ENCODE measurements at regions of chr20 and their contacts with region 1.

Region 1: GRCh38 chr20:45880988-45881788 is at the start of gene ZSWIM1:
- DNase-seq: peak; percentile 95 to 100 (median 98)
- ATAC-seq: peak; percentile 96 to 99 (median 96)
- H3K4me3 ChIP-seq: peak within 1 kb of the TSS; percentile 66 to 85
- H3K4me3 Mint-ChIP-seq: peak within 1 kb of the TSS; percentile 81 to 90 (median 88)
- H3K27ac ChIP-seq: peak within 1 kb of the TSS; percentile 71
- H3K27ac Mint-ChIP-seq: peak within 1 kb of the TSS; percentile 89 to 95
- H3K4me1 ChIP-seq: peaks cover 5 to 32% of the 10 kb centered on the region in 2 experiments
- H3K4me1 Mint-ChIP-seq: peaks cover 43 to 44% (median 43%) of the 10 kb centered on the region in 3 donors
- H3K27me3 ChIP-seq: no peaks in the 10 kb centered on the region
- H3K27me3 Mint-ChIP-seq: no peaks in the 10 kb centered on the region
- total RNA-seq, gene ZSWIM1: 8.3 to 17.2 (median 14.6) TPM

Region 2: GRCh38 chr20:45842169-45842812 is 38.9 kb before region 1 on chr20:
- CTCF ChIA-PET with region 1: no interaction called
- POLR2A ChIA-PET with region 1: interaction called in 1 of 2 experiments, 10 read pairs
- DNase-seq: no peak
- ATAC-seq: no peak
- H3K4me3 ChIP-seq: no peak overlapping the region
- H3K4me3 Mint-ChIP-seq: no peak overlapping the region
- H3K27ac ChIP-seq: no peak overlapping the region
- H3K27ac Mint-ChIP-seq: peak overlapping the region in 1 of 2 donors; percentile 55
- H3K4me1 ChIP-seq: no peaks in the 10 kb centered on the region
- H3K4me1 Mint-ChIP-seq: peaks cover 0 to 3% (median 0%) of the 10 kb centered on the region in 3 donors
- H3K27me3 ChIP-seq: no peaks in the 10 kb centered on the region
- H3K27me3 Mint-ChIP-seq: no peaks in the 10 kb centered on the region

Measured in T-cell (primary cell).